AG04450 (cell line): ENCODE measurements at regions of chr3 and their contacts with region 1.

Region 1: DNA sequence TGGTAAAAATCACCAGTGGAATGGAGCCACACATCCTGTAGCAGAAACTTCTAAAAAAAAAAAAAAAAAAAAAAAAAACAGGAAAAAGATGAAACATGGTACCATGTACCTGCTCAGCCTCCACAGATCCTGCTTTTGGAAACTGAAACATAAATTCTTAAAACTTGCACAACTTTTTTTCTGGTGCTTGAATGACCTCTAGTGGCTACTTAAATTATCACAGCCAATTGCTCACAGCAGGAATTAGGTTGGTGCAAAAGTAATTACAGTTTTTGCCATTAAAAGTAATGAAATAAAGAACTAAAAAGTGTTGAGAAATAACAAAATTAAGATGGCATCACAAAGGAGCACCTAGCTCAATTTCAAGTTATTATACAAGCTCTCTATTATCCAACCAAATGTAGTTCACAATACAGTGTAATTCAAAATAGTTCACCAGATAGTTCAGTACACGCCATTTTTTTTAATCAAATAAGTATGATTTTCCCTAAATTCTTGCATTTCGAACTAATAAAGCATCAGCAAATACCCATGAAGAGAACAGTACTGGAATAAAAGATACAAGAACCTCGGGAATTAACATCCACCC is 80.6 kb downstream of the ULK4 start:
- DNase-seq: no peak
- H3K4me3 ChIP-seq: no peak overlapping the region
- H3K27ac ChIP-seq: no peak overlapping the region
- H3K27me3 ChIP-seq: no peaks in the 10 kb centered on the region
- CTCF ChIP-seq: peak; percentile 64

Region 2: GRCh38 chr3:40580494-40581091 is 1300.7 kb before region 1 on chr3:
- CTCF ChIA-PET with region 1: interaction called, 27 read pairs
- POLR2A ChIA-PET with region 1: no interaction called
- DNase-seq: peak; percentile 32
- H3K4me3 ChIP-seq: no peak overlapping the region
- H3K27ac ChIP-seq: no peak overlapping the region
- H3K27me3 ChIP-seq: peaks cover 15% of the 10 kb centered on the region
- CTCF ChIP-seq: peak; percentile 98

Region 3: DNA sequence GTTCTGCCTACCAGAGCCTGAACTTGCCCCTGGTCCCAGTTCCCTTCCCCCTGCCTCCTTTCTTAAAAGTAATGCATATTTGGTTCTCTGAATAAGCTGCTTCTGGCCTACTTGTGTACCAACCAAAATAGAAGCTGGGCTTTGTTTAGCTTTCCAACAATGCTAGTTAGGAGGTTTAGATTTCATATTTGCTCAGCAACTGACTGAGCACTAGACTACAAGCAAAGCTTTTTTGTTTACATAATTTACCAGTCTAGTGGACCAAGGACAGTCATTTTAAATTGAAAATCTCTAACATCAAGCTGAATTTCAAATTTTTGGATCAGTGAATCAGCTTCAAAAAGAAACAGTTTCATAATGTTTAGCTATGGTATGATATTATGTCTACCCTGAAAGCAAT is 250.6 kb before region 1 on chr3:
- CTCF ChIA-PET with region 1: no interaction called
- POLR2A ChIA-PET with region 1: no interaction called
- DNase-seq: no peak
- H3K4me3 ChIP-seq: no peak overlapping the region
- H3K27ac ChIP-seq: no peak overlapping the region
- H3K27me3 ChIP-seq: no peaks in the 10 kb centered on the region
- CTCF ChIP-seq: no peak

Region 4: DNA sequence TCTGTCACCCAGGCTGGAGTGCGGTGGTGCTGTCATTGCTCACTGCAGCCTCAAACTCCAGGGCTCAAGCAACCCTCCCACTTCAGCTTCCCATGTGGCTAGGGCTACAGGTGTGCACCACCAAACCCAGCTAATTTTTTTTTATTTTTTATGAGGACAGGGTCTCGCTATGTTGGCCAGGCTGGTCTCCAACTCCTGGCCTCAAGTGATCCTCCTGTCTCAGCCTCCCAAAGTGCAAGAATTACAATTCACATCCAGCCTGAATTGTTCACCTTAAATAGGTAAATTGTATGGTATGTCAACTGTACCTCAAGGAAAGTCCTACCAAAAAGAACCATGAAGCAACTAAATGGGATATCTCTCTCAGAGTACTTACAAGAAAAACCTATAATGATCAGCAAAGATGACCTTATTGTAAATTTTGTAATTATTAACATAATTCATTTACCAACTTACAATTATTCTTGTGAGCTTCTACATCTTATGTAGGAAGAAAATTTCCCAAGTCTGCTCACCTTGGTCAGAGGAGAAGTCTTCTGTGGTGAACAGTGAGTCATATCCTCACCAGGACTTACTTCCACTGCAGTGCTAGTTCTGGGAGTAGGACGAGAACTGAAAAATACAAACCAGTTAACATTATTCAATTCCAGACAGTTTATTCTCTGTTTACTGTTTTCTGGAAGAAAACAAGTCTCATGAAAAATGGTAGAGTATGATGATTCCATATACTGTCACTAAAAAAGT is 26.2 kb after region 1 on chr3:
- CTCF ChIA-PET with region 1: no interaction called
- POLR2A ChIA-PET with region 1: no interaction called
- DNase-seq: no peak
- H3K4me3 ChIP-seq: no peak overlapping the region
- H3K27ac ChIP-seq: no peak overlapping the region
- H3K27me3 ChIP-seq: no peaks in the 10 kb centered on the region
- CTCF ChIP-seq: no peak